ENCODE measurements at regions of chr11 and their contacts with region 1.

Region 1: DNA sequence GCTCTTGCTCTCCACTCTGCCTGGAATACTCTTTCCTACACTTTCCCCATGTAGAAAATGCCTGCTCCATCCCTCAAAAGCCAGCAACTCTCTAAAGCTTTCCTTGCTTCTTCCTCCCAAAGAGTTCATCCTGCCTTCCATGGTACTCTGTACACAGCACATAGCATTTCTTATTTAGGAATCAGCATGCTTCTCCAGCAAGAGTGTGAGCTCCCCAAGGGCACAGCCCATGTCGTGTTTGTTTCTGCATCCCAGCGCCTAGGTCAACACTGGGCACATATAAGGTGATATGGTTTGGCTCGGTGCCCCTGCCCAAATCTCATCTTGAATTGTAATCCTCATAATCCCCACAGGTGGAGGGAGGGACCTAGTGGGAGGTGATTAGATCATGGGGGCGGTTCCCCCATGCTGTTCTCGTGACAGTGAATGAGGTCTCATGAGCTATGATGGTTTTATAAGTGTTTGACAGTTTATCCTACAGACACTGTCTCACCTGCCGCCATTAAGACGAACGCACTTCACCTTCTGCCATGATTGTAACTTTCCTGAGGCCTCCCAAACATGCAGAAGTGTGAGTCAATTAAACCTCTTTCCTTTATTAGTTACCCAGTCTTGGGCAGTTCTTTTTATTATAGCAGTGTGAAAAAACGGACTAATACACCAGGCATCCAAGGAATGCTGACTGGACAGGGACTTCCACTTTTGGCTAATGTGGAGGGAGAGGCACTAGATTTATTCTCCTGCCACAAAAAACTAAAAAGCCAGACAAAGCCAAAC is 8.2 kb downstream of the VPS37C start:
- DNase-seq: peak; percentile 79
- H3K4me3 ChIP-seq: no peak overlapping the region
- H3K27ac ChIP-seq: peak overlapping the region; percentile 82
- H3K4me1 ChIP-seq: peaks cover 44% of the 10 kb centered on the region
- H3K27me3 ChIP-seq: no peaks in the 10 kb centered on the region
- CTCF ChIP-seq: no peak

Region 2: GRCh38 chr11:61384271-61385242 is 231.6 kb after region 1 on chr11:
- CTCF ChIA-PET with region 1: no interaction called
- dilution Hi-C with region 1: no loop called
- in situ Hi-C with region 1: no loop called
- intact Hi-C with region 1: loop called (anchors 10 kb)
- DNase-seq: no peak
- H3K4me3 ChIP-seq: no peak overlapping the region
- H3K27ac ChIP-seq: no peak overlapping the region
- H3K4me1 ChIP-seq: peaks cover 9% of the 10 kb centered on the region
- H3K27me3 ChIP-seq: no peaks in the 10 kb centered on the region
- CTCF ChIP-seq: peak; percentile 51 to 60

Measured in mammary epithelial cell (primary cell).